Kidney (tissue), 22 donors: ENCODE measurements at regions of chr10 and their contacts with region 1.

Region 1: DNA sequence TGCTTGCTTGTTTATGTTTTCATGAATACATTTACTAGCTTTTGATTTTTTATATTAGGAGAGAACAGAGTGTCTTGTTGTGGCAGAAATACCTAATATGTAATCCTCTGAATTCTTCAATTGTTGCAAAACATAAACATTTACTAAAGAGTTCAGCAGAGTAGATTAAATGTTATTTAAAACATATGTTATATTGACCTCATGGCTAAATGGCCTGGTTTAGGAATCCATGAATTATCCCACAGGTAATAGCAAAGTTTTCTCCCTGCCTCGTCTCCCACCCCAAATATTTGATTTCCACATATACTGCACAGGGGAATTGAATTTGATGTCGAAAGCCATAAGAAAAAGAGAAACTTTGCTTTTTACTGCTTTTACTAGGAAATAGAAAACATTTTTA is 111.8 kb downstream of the ADK start:
- DNase-seq: no peak
- H3K4me3 ChIP-seq: no peak overlapping the region
- H3K27ac ChIP-seq: no peak overlapping the region
- H3K4me1 ChIP-seq: no peaks in the 10 kb centered on the region
- H3K27me3 ChIP-seq: no peaks in the 10 kb centered on the region
- CTCF ChIP-seq: no peak

Region 2: DNA sequence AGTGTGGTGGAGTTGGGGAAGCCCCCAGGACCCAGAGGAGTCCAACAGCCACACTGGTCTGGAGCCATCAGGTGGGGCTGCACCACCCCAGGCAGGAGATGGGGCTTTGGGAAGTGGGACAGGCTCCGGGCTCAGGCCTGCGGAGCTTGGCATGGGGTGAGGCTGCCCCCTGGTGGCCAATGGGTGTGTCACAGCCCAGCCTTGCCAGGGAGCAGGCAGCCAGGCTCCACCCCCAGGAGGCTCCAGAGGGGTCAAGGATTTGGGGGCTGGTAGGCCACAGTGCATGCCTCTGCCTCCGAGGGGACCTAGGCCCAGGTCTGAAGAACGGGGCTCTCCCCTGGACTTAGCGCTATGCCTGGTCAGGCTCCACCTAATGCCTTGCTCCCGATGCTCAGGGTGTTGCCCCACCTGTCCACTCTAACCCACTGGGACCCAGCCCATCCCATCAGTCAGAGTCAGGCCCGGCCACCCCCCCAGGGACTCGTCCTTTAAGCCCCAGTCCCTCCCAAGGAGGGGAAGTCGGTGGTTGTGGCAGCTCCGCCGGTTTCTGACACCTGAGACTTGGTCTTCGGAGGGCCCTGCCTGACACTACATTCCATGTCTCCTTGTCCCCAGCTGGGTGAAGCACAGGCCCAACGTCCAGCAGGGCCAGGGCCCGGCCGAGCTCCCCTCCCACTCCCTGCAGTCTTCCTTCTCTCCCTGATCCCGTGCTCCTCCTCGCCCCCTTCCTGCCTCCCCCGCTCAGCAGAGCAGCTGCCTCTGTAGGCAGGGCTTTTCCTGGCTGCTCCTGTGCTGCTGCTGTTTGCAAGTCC is 837.3 kb after region 1 on chr10:
- intact Hi-C with region 1: loop called (anchors 10 kb)
- DNase-seq: peak; percentile 77 to 91 (median 86)
- H3K4me3 ChIP-seq: no peak overlapping the region
- H3K27ac ChIP-seq: no peak overlapping the region
- H3K4me1 ChIP-seq: peaks cover 0 to 6% (median 0%) of the 10 kb centered on the region in 3 donors
- H3K27me3 ChIP-seq: no peaks in the 10 kb centered on the region
- CTCF ChIP-seq: peak; percentile 95